Endothelial cell of umbilical vein (primary cell): ENCODE measurements at regions of chr2 and their contacts with region 1.

Region 1: DNA sequence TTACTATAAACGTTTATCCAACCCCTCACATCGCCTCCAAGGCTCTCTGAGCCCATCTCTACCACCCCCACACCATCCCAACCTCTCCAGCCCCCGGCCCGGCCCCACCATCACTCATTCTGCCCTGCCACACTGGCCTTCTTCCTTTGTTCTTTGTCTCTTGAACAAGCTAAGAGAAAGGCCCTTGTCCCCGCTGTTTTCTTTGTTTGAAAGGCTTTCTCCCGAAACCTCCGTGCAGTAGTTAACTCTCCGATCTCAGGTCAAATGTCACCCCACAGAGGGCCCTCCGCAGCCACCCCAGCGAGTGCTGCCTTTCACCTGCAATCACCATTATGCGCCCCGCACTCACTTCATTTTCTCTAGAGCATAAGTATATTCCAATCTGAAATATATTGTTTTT is 100.4 kb downstream of the AFF3 start:
- DNase-seq: no peak
- H3K4me3 ChIP-seq: no peak overlapping the region
- H3K27ac ChIP-seq: no peak overlapping the region
- H3K4me1 ChIP-seq: no peaks in the 10 kb centered on the region
- H3K27me3 ChIP-seq: no peaks in the 10 kb centered on the region
- CTCF ChIP-seq: no peak
- POLR2A ChIP-seq: no peak

Region 2: DNA sequence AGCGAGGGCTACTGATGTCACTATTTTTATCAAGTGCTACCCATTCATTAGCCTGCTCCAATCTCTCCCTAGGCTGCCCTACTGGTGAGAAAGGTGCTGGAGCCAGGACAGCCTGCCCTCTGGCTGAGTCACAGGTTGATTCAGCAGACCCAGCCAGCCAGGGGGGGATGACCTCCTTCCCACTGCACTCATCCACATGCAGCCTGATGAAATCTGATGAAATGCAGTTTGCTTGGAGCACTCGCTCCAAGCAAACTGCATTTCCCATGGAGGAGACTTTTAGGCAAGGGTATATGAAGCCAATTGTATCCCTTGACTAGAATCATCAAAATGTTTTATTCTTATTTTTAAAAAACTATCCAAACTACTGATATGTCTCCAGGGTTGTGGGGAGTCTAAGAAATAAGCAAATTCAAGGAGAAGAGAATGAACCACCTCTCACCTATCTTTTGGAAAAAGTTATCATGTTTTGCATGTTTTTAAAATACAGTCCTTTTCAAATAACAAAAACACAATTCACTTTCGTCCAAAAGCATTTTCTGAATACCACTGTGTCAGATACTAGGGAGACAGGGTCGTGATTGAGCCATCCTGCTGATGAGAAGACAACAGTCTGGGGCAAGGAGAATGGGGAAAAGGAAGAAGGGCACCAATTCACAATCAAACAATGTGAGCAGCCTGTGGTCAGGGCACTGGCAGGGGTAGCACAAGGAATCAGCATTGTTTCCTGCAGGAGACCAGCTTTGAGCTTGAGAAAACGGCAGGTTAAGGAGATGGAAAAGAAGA is 27.9 kb before region 1 on chr2:
- CTCF ChIA-PET with region 1: no interaction called
- POLR2A ChIA-PET with region 1: no interaction called
- dilution Hi-C with region 1: no loop called
- intact Hi-C with region 1: loop called (anchors 1 kb)
- DNase-seq: peak; percentile 21
- H3K4me3 ChIP-seq: no peak overlapping the region
- H3K27ac ChIP-seq: no peak overlapping the region
- H3K4me1 ChIP-seq: peaks cover 3% of the 10 kb centered on the region
- H3K27me3 ChIP-seq: no peaks in the 10 kb centered on the region
- CTCF ChIP-seq: no peak
- POLR2A ChIP-seq: no peak

Region 3: GRCh38 chr2:100113990-100114433 is 72.0 kb after region 1 on chr2:
- CTCF ChIA-PET with region 1: no interaction called
- POLR2A ChIA-PET with region 1: no interaction called
- dilution Hi-C with region 1: no loop called
- intact Hi-C with region 1: no loop called
- DNase-seq: no peak
- H3K4me3 ChIP-seq: no peak overlapping the region
- H3K27ac ChIP-seq: no peak overlapping the region
- H3K4me1 ChIP-seq: no peaks in the 10 kb centered on the region
- H3K27me3 ChIP-seq: peaks cover 22% of the 10 kb centered on the region in 2 experiments
- CTCF ChIP-seq: no peak
- POLR2A ChIP-seq: no peak